Left colon (tissue), 2 donors: ENCODE measurements at regions of chr12 and their contacts with region 1.

Region 1: DNA sequence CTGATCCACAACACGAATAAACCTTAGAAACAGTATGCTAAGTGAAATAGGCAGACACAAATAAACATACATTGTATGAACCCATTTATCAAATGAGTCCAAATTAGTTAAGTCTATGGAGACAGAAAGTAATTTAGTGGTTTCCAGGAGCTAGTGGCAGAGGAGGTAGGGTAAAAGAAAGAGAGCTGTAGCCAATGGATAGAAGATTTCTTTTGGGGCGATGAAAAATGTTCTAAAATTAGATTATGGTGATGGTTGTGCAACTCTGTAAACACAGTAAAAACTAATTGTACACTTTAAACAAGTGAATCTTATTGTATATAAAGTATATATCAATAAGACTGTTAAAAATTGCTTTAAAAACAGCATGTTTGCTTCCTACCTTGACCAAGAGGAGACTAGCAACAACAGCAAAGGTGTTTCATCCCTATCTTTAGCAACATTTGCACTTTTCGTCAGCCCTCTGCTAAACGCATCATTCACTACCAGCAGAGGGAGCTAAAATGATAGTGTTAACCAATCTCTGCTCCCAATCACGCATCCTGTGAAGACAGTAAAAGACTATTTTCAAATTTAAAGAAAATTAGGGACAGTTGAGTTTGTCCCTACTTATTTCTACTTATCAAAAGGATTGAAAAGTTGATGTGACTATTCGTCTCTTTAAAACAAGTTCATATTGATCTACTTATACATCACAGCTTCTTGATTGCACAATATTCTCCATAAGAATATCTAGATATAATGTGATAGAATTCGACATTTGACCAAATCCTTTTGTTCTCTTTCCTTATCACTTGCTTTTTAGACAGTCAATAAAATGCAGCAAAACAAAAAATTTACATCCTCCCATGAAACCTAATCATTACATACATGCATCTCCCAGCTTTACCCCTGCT is 24.0 kb upstream of the LGR5 start:
- DNase-seq: no peak
- ATAC-seq: peak; percentile 76

Region 2: DNA sequence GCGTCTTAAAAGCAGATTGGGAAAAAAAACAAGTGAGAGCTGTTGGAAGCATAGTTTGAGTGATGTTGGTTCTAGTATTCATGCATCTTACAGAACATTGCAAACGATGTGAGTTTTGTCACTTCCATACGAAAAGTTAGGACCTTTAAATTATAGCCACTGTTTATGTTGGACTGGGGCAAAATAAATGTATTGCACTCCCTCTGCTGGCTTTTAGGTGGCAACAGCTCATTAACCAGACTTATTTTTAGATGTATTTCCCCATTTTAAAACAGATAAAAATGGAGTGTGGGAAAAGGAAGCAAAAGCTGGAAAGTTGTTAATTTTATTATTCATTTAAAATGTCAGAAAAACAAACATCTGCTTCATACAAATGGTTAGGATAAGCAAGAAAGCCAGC is 135.9 kb after region 1 on chr12:
- intact Hi-C with region 1: loop called in 1 of 2 experiments (anchors 10 kb)
- DNase-seq: no peak
- ATAC-seq: peak; percentile 26

Region 3: DNA sequence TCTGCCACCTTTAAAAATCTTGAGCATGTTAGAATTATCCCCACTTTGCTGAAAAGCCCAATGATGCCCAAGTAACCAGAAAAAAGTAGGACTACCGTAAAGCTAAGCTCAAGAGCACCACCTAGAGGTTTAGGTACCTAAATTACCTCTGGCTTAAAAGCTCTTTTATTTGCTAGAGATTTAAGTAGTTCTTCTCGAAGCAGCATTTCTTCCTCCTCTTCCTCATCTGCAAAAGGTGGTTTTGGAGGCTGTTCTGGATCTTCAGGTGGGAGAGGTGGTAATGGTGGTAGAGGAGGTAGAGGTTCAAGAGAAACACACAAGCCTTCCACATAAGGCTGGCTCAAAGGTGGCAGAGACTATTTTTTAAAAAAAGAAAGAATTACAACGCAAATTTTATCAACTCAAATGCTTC is 221.1 kb after region 1 on chr12:
- intact Hi-C with region 1: loop called in 1 of 2 experiments (anchors 10 kb)
- DNase-seq: no peak
- ATAC-seq: peak; percentile 71

Region 4: DNA sequence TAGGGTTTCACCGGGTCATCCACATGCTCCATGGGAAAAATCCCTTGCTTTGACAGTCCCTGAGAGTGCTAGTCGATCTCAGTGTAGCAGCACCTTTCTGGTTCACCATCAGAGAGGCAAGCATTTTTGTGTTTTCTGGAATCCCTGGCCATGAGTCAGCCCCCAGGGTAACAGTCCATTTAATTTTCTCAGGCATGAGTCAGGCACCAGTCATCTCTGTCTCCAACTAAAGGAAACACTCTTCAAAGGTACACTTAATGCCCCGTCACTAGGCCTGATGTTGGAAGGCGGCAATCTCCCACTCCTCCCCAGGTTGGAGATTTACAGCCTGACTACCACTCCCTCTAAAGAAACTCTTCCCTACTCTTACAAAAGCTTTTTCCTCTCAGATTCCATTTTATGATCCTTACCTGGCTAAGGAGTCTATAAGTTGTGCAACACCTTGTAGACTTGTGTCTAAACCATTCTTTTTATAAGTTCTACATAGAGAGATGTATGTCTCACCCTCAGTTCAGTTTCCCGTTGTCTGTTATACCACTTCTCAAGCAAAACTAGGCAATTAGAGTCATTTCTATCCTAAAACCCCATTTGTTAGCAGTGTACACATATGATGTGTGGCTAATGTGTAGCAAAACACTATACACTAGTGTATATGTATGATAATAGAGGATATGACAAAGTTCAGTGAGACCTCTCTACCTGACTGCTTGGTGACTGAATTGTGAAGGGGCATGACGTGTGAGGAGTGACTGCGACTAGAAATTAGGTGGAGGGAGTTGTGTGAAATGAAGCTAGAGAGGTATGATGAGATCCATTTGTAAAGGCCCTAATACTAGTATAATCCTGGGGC is 294.9 kb after region 1 on chr12:
- intact Hi-C with region 1: no loop called
- DNase-seq: no peak
- ATAC-seq: no peak

Region 5: DNA sequence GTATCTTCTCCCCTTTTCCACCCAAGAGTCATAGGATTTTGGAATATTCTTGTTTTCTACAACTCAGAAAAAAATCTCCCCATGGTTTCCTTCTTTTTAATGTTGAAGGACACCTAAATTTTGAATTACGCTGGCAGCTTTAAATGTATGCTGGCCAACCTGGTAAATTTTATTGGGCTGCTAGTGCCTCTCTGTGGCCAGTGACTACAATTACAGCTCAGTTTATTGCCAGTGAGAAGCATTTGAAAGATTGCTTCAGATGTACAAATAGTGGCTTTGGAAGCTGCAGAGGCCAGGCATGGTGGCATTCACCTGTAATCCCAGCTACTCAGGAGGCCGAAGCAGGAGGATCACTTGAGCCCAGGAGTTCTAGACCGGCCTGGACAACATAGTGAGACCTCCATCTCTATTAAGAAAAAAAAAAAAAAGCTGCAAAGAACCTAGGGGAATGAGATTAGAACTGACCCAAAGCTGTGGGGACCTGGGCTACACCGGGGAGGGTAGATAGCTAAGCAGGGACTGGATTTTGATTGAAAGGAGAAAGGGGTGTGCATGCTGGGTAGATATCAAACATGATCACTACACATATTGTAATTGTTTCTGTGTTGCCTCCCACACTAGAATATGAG is 331.5 kb after region 1 on chr12:
- intact Hi-C with region 1: loop called in 1 of 2 experiments (anchors 5 kb)
- DNase-seq: peak in 1 of 2 donors; percentile 34
- ATAC-seq: peak; percentile 91